Activated B cell treated with CpG ODN at 0.5 μM for 24 hours (primary cell): ENCODE measurements at regions of chr5 and their contacts with region 1.

Region 1: GRCh38 chr5:75668977-75669689 is 48.1 kb downstream of the POC5 start:
- DNase-seq: no peak
- ATAC-seq: peak; percentile 94
- H3K4me3 Mint-ChIP-seq: peak overlapping the region; percentile 80
- H3K27ac Mint-ChIP-seq: peak overlapping the region; percentile 73
- H3K4me1 Mint-ChIP-seq: peaks cover 16% of the 10 kb centered on the region
- H3K27me3 Mint-ChIP-seq: no peaks in the 10 kb centered on the region
- CTCF ChIP-seq: no peak

Region 2: GRCh38 chr5:75574791-75575190 is 94.3 kb before region 1 on chr5:
- CTCF ChIA-PET with region 1: no interaction called
- POLR2A ChIA-PET with region 1: no interaction called
- intact Hi-C with region 1: loop called (anchors 10 kb)
- DNase-seq: no peak
- ATAC-seq: no peak
- H3K4me3 Mint-ChIP-seq: peak overlapping the region; percentile 76
- H3K27ac Mint-ChIP-seq: peak overlapping the region; percentile 86
- H3K4me1 Mint-ChIP-seq: peaks cover 37% of the 10 kb centered on the region
- H3K27me3 Mint-ChIP-seq: no peaks in the 10 kb centered on the region
- CTCF ChIP-seq: no peak

Region 3: DNA sequence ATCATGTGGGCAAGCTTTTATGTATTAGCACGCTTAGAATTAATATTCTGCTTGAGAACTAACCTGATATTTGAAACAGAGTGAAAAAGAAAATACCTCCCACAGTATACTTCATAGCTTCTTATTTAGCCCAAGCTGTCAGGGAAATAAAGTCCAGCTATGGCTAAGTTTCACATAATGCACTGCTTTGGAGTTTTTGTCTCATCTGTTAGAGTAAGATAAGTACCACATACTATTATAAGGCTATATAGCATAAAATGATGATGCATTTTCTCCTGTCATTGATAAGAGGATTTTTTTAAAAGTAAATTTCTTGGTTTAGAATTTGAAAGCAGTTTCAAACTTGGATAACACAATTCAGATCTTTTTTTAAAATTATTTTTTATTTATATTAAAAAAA is 60.3 kb before region 1 on chr5:
- CTCF ChIA-PET with region 1: no interaction called
- POLR2A ChIA-PET with region 1: no interaction called
- intact Hi-C with region 1: loop called (anchors 5 kb)
- DNase-seq: no peak
- ATAC-seq: no peak
- H3K4me3 Mint-ChIP-seq: no peak overlapping the region
- H3K27ac Mint-ChIP-seq: no peak overlapping the region
- H3K4me1 Mint-ChIP-seq: peaks cover 16% of the 10 kb centered on the region
- H3K27me3 Mint-ChIP-seq: peaks cover 17% of the 10 kb centered on the region
- CTCF ChIP-seq: no peak

Region 4: DNA sequence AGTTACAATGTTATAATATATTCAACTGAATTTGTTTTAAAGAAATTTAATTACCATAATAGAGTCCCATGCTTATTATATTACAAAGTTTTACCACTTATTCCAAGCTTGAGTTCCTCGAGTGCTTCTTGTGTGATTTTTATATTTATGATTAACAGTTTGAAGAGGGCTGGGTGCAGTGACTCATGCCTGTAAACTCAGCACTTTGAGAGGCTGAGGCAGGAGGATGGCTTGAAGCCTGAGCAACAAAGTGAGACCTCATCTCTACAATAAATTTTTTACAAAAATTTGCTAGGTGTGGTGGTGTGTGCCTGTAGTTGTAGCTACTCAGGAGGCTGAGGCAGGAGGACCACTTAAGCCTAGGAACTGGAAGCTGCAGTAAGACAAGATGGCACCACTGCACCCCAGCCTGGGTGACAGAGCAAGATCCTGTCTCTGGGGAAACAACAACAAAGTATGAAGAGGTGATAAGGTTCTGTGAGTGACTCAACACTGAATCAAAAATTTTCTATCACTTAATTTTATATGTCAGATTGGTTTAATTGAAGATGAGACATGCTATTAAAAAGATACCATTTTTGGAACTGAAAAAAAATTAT is 38.9 kb after region 1 on chr5:
- CTCF ChIA-PET with region 1: no interaction called
- POLR2A ChIA-PET with region 1: no interaction called
- intact Hi-C with region 1: loop called (anchors 5 kb)
- DNase-seq: no peak
- ATAC-seq: no peak
- H3K4me3 Mint-ChIP-seq: no peak overlapping the region
- H3K27ac Mint-ChIP-seq: no peak overlapping the region
- H3K4me1 Mint-ChIP-seq: peaks cover 4% of the 10 kb centered on the region
- H3K27me3 Mint-ChIP-seq: no peaks in the 10 kb centered on the region
- CTCF ChIP-seq: no peak